WTC11 (cell line): ENCODE measurements at regions of chr5 and their contacts with region 1.

Region 1: DNA sequence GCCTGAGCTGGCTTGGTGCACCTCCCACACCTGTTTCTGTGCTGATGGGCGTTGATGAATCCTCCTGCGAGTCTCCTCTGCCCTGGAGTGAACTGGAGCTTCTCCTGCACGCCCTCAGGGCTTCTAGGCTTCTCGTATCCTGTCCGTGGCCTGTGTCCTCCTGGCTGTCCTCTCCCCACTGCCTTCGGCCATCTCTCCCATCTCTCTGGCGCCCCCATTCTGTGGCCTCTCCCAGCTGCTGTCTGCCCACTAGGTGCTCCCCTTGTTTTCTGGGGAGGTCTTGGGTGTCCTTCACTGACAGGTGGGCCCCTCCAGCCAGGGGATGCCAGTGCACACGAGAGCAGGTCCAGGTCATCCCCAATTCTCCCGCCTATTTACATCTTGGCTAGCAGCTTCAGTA is 28.8 kb downstream of the AHRR start:
- DNase-seq: peak; percentile 85
- ATAC-seq: peak; percentile 80
- H3K4me3 Mint-ChIP-seq: no peak overlapping the region; the same call in 1 of the 2 replicates
- H3K27ac Mint-ChIP-seq: peak overlapping the region; percentile 9; the same call in 1 of the 2 replicates
- H3K4me1 Mint-ChIP-seq: peaks cover 17% of the 10 kb centered on the region
- H3K27me3 Mint-ChIP-seq: no peaks in the 10 kb centered on the region
- CTCF ChIP-seq: peak; percentile 33; the same call in 1 of the 2 replicates

Region 2: DNA sequence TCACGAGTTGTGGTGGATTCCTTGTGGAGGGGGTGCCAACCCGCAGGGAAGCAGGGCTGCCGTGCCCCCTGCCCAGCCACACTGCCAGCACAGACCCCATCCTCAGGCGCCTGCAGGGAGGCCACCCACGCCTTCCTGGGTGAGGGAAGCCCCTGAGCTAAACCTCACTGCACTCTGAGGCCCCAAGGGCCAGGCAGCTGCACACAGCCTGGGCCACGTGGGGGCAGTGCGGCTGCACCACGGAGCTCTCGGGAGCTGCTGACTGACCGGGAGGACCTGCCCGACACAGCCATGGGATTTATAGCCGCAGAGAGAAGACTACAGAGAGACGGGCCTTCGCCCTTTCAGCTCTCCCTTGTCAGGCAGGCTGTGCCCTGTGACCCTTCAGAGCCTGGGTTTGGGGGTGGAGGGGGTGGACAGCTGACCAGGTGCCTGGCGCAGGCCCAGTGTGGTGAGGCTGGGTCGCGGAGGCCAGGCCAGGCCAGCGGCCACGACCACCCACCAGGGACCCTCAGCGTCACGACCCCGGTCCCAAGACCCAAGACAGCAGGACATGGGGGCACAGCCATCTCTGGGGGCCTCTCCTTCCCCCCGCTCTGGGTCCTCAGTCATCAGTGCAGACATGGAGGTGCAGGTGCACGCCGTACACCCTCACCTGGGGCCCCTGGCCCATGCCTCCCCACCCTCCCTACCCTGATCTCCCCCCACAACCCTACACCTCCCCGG is 33.1 kb before region 1 on chr5:
- CTCF ChIA-PET with region 1: interaction called, 14 read pairs
- POLR2A ChIA-PET with region 1: no interaction called
- DNase-seq: peak; percentile 82
- ATAC-seq: peak; percentile 80
- H3K4me3 Mint-ChIP-seq: no peak overlapping the region
- H3K27ac Mint-ChIP-seq: no peak overlapping the region
- H3K4me1 Mint-ChIP-seq: peaks cover 6% of the 10 kb centered on the region
- H3K27me3 Mint-ChIP-seq: peaks cover 34% of the 10 kb centered on the region
- CTCF ChIP-seq: peak; percentile 48; the same call in 1 of the 2 replicates

Region 3: GRCh38 chr5:360257-361027 is 10.1 kb after region 1 on chr5:
- CTCF ChIA-PET with region 1: interaction called, 10 read pairs
- POLR2A ChIA-PET with region 1: no interaction called
- DNase-seq: no peak
- ATAC-seq: no peak
- H3K4me3 Mint-ChIP-seq: no peak overlapping the region
- H3K27ac Mint-ChIP-seq: no peak overlapping the region
- H3K4me1 Mint-ChIP-seq: no peaks in the 10 kb centered on the region
- H3K27me3 Mint-ChIP-seq: no peaks in the 10 kb centered on the region
- CTCF ChIP-seq: no peak

Region 4: GRCh38 chr5:399296-400281 is 49.2 kb after region 1 on chr5:
- CTCF ChIA-PET with region 1: interaction called, 11 read pairs
- POLR2A ChIA-PET with region 1: no interaction called
- DNase-seq: peak; percentile 89
- ATAC-seq: peak; percentile 75
- H3K4me3 Mint-ChIP-seq: peak overlapping the region; percentile 44
- H3K27ac Mint-ChIP-seq: peak overlapping the region; percentile 26; the same call in 1 of the 2 replicates
- H3K4me1 Mint-ChIP-seq: peaks cover 12% of the 10 kb centered on the region
- H3K27me3 Mint-ChIP-seq: peaks cover 19% of the 10 kb centered on the region
- CTCF ChIP-seq: no peak

Region 5: DNA sequence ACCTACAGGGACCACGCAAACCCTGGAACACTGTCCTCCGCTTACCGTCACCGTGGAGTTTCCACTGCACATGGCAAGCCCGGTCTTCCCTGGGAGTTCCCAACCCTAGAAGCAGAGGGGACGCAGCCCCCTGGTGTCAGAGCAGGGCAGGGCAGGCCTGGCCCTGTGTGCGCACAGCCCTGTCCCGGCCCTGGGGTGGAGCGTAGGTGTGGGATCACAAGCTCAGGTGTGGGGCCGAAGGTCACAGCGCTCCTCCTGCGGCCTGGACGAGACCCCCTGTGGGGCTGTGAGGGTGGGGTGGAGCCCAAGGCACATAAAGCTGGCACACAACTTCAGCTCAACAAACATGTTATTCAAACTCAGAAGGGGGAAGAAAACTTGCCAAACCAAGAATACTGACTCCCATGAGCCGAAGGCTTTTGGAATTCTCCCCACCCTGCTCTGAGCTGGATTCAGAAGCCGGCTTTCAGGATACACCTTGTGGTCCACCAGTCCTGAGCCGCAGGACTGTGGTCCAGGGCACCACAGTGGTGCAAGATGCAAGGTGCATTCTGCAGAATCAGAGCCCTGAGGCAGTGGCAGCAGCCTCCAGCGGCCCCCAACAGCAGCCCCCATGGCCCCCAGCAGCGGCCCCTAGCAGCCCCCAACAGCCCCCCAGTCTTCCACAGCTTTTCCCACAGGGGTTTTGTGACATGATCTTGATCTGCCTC is 80.8 kb after region 1 on chr5:
- CTCF ChIA-PET with region 1: interaction called, 26 read pairs
- POLR2A ChIA-PET with region 1: no interaction called
- DNase-seq: peak; percentile 90
- ATAC-seq: peak; percentile 97
- H3K4me3 Mint-ChIP-seq: no peak overlapping the region
- H3K27ac Mint-ChIP-seq: peak overlapping the region; percentile 60; the same call in 1 of the 2 replicates
- H3K4me1 Mint-ChIP-seq: peaks cover 4% of the 10 kb centered on the region; the same call in 1 of the 2 replicates
- H3K27me3 Mint-ChIP-seq: no peaks in the 10 kb centered on the region
- CTCF ChIP-seq: peak; percentile 77

Region 6: GRCh38 chr5:472076-472655 is 121.8 kb after region 1 on chr5:
- CTCF ChIA-PET with region 1: no interaction called
- POLR2A ChIA-PET with region 1: no interaction called
- DNase-seq: peak; percentile 18
- ATAC-seq: peak; percentile 5
- H3K4me3 Mint-ChIP-seq: peak overlapping the region; percentile 64
- H3K27ac Mint-ChIP-seq: no peak overlapping the region
- H3K4me1 Mint-ChIP-seq: peaks cover 9% of the 10 kb centered on the region
- H3K27me3 Mint-ChIP-seq: peaks cover 42% of the 10 kb centered on the region
- CTCF ChIP-seq: no peak